HEK293 (cell line): ENCODE measurements at regions of chr4 and their contacts with region 1.

Region 1: GRCh38 chr4:159201168-159201567 is 98.3 kb downstream of the RAPGEF2 start:
- H3K4me3 ChIP-seq: no peak overlapping the region
- H3K27ac ChIP-seq: no peak overlapping the region
- H3K4me1 ChIP-seq: peaks cover 15% of the 10 kb centered on the region; the same call in 1 of the 2 replicates
- CTCF ChIP-seq: no peak

Region 2: DNA sequence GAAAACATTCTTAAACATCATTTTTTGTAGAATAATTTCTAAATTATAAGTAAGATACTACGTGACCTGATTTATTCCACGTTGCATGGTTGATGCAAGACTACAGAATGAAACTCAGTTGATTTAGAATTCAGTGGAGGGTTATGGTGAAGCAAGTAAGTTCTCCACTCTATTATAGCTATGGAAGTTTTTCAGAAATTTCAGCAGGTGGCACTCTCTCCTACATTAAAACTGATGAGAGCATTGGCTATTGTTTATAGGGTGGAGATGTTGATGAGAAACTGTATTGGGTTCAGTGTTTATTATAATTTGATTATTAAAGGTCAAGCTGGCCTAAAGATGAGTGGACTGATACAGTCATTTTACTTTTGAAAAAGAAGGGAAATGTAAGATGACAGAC is 344.3 kb before region 1 on chr4:
- CTCF ChIA-PET with region 1: interaction called, 16 read pairs
- POLR2A ChIA-PET with region 1: no interaction called
- H3K4me3 ChIP-seq: no peak overlapping the region
- H3K27ac ChIP-seq: no peak overlapping the region
- H3K4me1 ChIP-seq: no peaks in the 10 kb centered on the region
- CTCF ChIP-seq: no peak

Region 3: DNA sequence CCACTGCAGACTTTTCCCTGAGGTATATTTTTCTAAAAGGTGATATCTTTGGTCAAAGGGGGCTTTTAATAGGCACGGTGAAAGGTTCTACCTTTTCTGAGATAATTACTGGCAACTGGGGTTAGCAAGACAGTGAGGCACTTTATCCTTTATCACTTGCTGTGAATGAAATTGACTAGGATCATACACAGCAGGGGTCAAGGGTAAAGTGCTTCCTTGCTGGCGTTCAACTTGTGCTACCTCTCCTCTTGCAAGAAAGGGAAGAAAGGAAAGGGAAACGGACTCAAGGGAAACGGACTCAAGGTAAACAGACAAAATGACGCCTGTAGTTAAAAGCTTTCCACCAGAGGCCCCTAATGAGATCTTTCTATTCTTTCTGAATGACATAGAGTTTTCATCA is 176.9 kb before region 1 on chr4:
- CTCF ChIA-PET with region 1: no interaction called
- POLR2A ChIA-PET with region 1: no interaction called
- H3K4me3 ChIP-seq: no peak overlapping the region
- H3K27ac ChIP-seq: no peak overlapping the region; the same call in 1 of the 2 replicates
- H3K4me1 ChIP-seq: peaks cover 6% of the 10 kb centered on the region
- CTCF ChIP-seq: no peak

Region 4: DNA sequence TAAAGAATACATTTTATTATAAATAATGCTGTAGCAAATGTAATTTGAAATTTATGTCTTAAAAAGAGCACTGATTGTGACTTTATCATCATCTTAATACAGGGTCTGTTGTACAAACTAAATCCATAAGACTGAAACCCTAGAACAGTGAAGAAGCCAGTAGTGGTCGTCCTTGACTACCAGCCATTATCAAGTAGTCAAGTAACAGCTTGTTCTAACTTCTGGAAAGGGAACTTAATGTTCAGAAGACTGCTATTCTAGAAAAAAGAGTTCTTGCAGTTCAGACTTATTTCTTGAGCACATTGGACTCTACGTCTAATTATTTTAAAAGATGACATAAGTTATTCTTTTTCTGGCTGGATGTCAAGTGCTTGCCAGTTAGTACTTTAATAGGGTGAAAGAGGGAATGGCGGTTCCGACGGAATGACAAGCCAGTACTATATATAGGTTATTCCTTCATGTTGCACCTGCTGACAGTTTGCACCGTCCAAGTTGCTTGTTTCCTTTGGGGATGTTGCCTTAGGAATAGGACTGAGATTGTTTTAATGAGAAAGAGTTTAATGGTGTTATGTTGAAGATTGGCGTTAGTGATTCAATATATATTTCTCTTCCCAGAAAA is 11.6 kb after region 1 on chr4:
- CTCF ChIA-PET with region 1: interaction called, 17 read pairs
- POLR2A ChIA-PET with region 1: no interaction called
- H3K4me3 ChIP-seq: no peak overlapping the region
- H3K27ac ChIP-seq: no peak overlapping the region
- H3K4me1 ChIP-seq: no peaks in the 10 kb centered on the region; the same call in 1 of the 2 replicates
- CTCF ChIP-seq: no peak